ENCODE measurements at regions of chr6 and their contacts with region 1.

Region 1: GRCh38 chr6:41278699-41279405 is 7.6 kb downstream of the TREM1 start:
- DNase-seq: peak; percentile 80
- ATAC-seq: peak; percentile 99
- H3K4me3 Mint-ChIP-seq: 0 out of 2 replicates have a peak overlapping the region, but pooled peaks have one; percentile 9
- H3K27ac Mint-ChIP-seq: no peak overlapping the region
- H3K4me1 Mint-ChIP-seq: peaks cover 10% of the 10 kb centered on the region
- H3K27me3 Mint-ChIP-seq: peaks cover 10% of the 10 kb centered on the region
- CTCF ChIP-seq: peak; percentile 47; the same call in 1 of the 2 replicates

Region 2: GRCh38 chr6:41228616-41229015 is 50.2 kb before region 1 on chr6:
- CTCF ChIA-PET with region 1: interaction called, 12 read pairs
- POLR2A ChIA-PET with region 1: no interaction called
- DNase-seq: peak; percentile 46
- ATAC-seq: peak; percentile 94
- H3K4me3 Mint-ChIP-seq: no peak overlapping the region
- H3K27ac Mint-ChIP-seq: no peak overlapping the region
- H3K4me1 Mint-ChIP-seq: peaks cover 4% of the 10 kb centered on the region; the same call in 1 of the 2 replicates
- H3K27me3 Mint-ChIP-seq: peaks cover 15% of the 10 kb centered on the region
- CTCF ChIP-seq: peak; percentile 20; the same call in 1 of the 2 replicates

Region 3: DNA sequence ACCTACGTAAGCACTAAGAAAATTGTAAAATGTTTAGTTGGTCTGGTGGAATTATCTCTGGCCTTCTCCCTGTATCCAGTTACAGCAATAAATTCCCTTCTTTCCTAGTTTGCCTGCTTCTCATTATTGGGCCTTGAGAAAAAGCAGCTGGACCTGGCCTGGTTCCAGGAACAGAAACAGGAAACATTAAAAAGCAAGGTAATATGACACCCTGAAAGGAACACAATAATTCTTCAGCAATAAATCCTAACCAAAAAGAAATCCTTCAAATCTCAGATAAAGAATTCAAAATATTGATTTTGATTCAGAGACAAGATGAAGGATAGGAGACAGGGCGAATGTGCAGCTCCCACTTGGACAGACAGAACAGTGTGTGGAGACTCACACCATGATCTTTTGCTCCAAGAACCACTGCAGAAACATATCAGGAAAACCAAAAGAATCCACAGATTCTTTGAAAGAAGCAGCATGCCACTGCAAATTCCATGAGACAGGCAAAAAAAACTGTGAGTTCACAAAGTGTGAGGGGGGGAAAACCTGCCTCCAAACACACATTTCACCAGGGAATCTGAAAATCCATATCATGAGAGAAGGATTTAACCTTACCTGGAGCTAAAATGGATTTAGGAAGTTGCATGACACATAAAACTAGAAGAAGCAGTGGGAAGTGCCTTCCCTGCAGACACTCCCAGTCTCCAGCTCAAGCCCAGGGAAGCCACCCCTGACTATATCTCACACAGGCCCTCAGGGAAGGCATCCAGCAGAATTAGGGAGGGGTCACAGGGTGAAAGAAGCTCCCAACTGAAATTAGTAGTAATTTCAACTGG is 21.3 kb before region 1 on chr6:
- CTCF ChIA-PET with region 1: no interaction called
- POLR2A ChIA-PET with region 1: no interaction called
- DNase-seq: no peak
- ATAC-seq: no peak
- H3K4me3 Mint-ChIP-seq: no peak overlapping the region
- H3K27ac Mint-ChIP-seq: no peak overlapping the region
- H3K4me1 Mint-ChIP-seq: no peaks in the 10 kb centered on the region
- H3K27me3 Mint-ChIP-seq: peaks cover 10% of the 10 kb centered on the region
- CTCF ChIP-seq: no peak

Region 4: DNA sequence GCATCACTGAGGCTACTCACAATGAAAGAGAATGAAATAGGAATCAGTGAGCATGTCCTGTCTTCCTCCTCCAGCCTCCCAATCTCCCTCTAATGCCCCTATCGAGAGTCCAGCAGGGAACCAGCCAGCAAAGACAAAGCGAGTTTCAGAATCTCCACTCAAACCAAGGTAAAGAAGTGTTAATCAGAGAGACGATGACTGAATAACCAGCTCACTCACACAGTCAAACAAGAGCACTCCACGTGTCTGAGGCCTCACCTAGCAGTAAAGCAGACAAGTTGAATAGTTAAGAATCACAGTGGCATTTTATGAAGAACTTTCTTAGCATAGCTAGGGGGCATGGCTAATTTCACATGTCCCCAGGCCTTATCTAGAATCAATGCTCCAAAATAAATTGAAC is 11.0 kb after region 1 on chr6:
- CTCF ChIA-PET with region 1: interaction called, 10 read pairs
- POLR2A ChIA-PET with region 1: no interaction called
- DNase-seq: no peak
- ATAC-seq: peak; percentile 50
- H3K4me3 Mint-ChIP-seq: no peak overlapping the region
- H3K27ac Mint-ChIP-seq: no peak overlapping the region
- H3K4me1 Mint-ChIP-seq: peaks cover 23% of the 10 kb centered on the region
- H3K27me3 Mint-ChIP-seq: peaks cover 71% of the 10 kb centered on the region
- CTCF ChIP-seq: no peak

Region 5: GRCh38 chr6:41306187-41306854 is 27.5 kb after region 1 on chr6:
- CTCF ChIA-PET with region 1: interaction called, 16 read pairs
- POLR2A ChIA-PET with region 1: no interaction called
- DNase-seq: peak; percentile 53
- ATAC-seq: peak; percentile 71
- H3K4me3 Mint-ChIP-seq: no peak overlapping the region
- H3K27ac Mint-ChIP-seq: no peak overlapping the region
- H3K4me1 Mint-ChIP-seq: peaks cover 15% of the 10 kb centered on the region
- H3K27me3 Mint-ChIP-seq: peaks cover 6% of the 10 kb centered on the region; the same call in 1 of the 2 replicates
- CTCF ChIP-seq: peak; percentile 69

Region 6: DNA sequence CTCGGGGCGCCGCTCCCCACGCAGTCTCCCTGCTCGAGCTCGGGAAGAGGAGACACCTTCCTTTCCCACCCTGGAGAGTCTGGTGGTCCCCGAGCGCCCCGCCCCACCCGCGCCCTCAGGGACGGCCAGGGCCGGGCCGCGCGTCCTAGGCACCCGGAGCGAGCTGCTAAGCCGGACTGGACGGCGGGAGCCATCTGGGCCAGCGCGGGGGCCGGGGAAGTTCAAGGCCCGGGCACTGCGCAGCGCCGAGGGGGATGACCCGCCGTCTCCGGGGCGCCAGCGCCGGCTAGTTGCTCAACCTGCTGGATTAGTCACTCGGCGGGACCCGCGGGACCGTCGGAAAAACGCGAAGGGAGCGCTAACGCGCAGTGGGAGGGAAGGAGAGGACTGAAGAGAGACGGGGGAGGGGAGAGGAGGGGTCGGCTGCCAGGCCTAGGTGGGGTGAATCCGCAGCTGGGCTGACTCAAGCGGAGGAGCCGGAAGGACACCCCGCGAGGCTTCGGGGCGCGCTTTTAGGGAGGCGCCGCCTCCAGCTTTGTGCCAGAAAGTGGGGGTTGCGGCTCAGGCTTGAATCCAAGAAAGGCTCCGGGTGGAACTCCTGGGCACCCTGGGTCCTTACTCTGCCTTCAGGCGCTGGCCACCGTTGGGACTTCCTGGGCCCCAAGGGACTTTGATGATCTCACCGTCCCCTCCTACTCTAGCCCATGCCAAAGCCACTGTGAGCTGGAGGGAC is 191.6 kb after region 1 on chr6:
- CTCF ChIA-PET with region 1: no interaction called
- POLR2A ChIA-PET with region 1: no interaction called
- DNase-seq: peak; percentile 54
- ATAC-seq: peak; percentile 31
- H3K4me3 Mint-ChIP-seq: peak overlapping the region; percentile 70
- H3K27ac Mint-ChIP-seq: no peak overlapping the region
- H3K4me1 Mint-ChIP-seq: peaks cover 47% of the 10 kb centered on the region
- H3K27me3 Mint-ChIP-seq: peaks cover 92% of the 10 kb centered on the region
- CTCF ChIP-seq: no peak

Measured in WTC11 (cell line).